ENCODE measurements at regions of chr22 and their contacts with region 1.

Region 1: GRCh38 chr22:39039306-39040126 is 1.1 kb upstream of the APOBEC3F start:
- DNase-seq: no peak
- H3K4me3 Mint-ChIP-seq: peak overlapping the region; percentile 76
- H3K27ac Mint-ChIP-seq: peak overlapping the region; percentile 90
- H3K4me1 Mint-ChIP-seq: peaks cover 25% of the 10 kb centered on the region
- H3K27me3 Mint-ChIP-seq: no peaks in the 10 kb centered on the region

Region 2: GRCh38 chr22:38601221-38601764 is 438.2 kb before region 1 on chr22:
- intact Hi-C with region 1: no loop called
- DNase-seq: no peak
- H3K4me3 Mint-ChIP-seq: no peak overlapping the region
- H3K27ac Mint-ChIP-seq: no peak overlapping the region
- H3K4me1 Mint-ChIP-seq: no peaks in the 10 kb centered on the region
- H3K27me3 Mint-ChIP-seq: peaks cover 21% of the 10 kb centered on the region

Region 3: GRCh38 chr22:39021552-39022250 is 17.8 kb before region 1 on chr22:
- intact Hi-C with region 1: loop called (anchors 2 kb)
- DNase-seq: no peak
- H3K4me3 Mint-ChIP-seq: peak overlapping the region; percentile 97
- H3K27ac Mint-ChIP-seq: peak overlapping the region; percentile 97
- H3K4me1 Mint-ChIP-seq: peaks cover 45% of the 10 kb centered on the region
- H3K27me3 Mint-ChIP-seq: no peaks in the 10 kb centered on the region